Right ventricle myocardium inferior (tissue), 1 donor: ENCODE measurements at regions of chr20 and their contacts with region 1.

Region 1: DNA sequence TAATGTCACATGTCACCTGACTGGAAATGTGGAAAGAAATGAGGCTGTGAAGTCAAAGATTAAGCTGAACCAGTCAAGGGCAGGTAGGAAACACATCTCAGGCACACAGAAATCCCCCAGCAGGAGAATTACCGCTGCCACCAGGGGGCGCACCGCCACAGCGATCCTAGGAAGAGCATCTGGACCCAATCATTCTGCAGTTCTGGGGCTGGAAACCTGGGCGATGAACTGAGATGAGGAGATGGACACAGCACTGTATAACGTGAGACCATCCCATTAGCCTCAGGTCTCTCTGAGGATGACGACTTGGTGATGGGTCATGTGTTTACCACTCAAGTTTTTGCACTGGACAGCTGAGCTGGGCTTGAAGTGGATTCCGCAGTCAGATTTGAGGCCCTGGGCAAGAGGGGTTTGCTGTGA is 6.5 kb upstream of the SLC24A3 start:
- DNase-seq: peak; percentile 89
- ATAC-seq: peak; percentile 31

Region 2: GRCh38 chr20:18904624-18905023 is 301.4 kb before region 1 on chr20:
- intact Hi-C with region 1: loop called (anchors 10 kb)
- DNase-seq: no peak
- ATAC-seq: no peak

Region 3: DNA sequence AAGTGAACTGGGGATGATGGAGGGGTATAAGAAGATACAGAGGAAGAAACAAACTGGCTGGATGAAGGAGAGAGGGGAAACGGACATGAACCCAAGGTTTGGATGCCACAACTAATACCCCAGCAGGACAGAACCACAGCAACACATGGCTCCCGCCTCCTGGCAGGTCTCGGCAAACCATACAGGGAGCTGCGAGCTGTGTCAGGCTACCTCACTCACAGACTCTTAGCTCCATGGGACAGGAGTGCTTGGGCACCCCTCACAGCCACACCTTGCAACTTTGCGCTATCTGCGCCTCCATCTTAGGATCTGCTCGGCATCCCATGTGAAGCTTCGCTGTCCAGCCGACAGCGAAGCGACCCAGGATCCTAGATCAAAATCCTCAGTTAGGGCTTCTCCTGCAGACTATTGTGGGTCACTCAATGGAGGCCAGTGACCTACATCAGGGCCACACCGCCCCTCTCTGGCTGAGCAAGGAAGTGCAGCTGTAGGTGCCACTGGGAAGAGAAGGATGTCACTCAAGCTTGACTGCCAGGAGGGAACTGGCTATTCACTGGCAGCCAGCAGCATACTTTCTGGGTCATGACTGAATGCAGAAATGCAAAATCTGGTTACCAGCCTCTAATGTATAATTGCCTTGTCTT is 377.7 kb after region 1 on chr20:
- intact Hi-C with region 1: loop called (anchors 1 kb)
- DNase-seq: peak; percentile 83
- ATAC-seq: peak; percentile 79